Activated naive CD4-positive, alpha-beta T cell treated with anti-CD3 and anti-CD28 coated beads, Interleukin-2, amount 10 ng/mL, durations not matched to agents 7 days and 5 days (primary cell): ENCODE measurements at regions of chr2 and their contacts with region 1.

Region 1: GRCh38 chr2:64914735-64915509 is 74.3 kb upstream of the SLC1A4 start:
- DNase-seq: no peak
- H3K4me3 Mint-ChIP-seq: no peak overlapping the region
- H3K27ac Mint-ChIP-seq: no peak overlapping the region
- H3K4me1 Mint-ChIP-seq: peaks cover 36% of the 10 kb centered on the region
- H3K27me3 Mint-ChIP-seq: peaks cover 4% of the 10 kb centered on the region

Region 2: GRCh38 chr2:64945973-64946768 is 31.2 kb after region 1 on chr2:
- CTCF ChIA-PET with region 1: interaction called, 11 read pairs
- DNase-seq: peak; percentile 79
- H3K4me3 Mint-ChIP-seq: peak overlapping the region; percentile 67
- H3K27ac Mint-ChIP-seq: peak overlapping the region; percentile 91
- H3K4me1 Mint-ChIP-seq: peaks cover 56% of the 10 kb centered on the region
- H3K27me3 Mint-ChIP-seq: peaks cover 1% of the 10 kb centered on the region

Region 3: DNA sequence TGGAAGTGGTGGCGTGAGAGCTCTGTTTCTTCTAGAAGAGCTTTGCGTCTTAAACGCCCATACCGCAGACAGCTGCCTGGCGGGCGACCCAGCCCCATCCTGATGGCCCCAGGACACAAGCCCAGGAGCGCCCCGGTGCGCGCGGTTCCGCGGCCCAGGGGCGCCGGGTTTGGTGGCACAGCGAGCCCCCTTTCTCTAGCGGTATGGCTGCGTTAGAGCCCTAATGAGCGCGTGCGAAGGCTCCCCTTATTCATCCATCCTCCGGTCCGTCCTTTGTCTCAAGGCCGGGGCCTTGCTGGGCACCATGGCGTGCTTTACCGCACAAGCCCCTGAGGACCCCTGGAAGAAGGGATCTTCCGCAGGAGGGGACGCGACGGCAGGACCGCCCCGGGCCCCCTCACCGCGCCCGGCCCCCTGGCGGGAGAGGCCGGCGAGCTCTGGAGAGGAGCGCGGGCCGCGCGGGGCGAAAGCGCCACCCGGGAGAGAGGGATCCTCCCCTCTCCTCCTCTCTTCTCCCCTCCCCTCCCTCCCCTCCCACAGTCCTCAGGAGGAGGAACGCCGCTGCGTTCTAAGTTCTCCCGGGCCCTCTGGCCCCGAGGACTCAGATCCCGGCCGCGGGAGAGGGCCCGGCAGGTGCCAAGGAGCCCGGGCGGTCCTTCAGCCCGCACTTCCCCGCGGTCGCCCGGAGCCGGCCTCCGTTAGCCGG is 73.7 kb after region 1 on chr2:
- CTCF ChIA-PET with region 1: interaction called, 60 read pairs
- DNase-seq: peak; percentile 84
- H3K4me3 Mint-ChIP-seq: peak overlapping the region; percentile 69
- H3K27ac Mint-ChIP-seq: peak overlapping the region; percentile 84
- H3K4me1 Mint-ChIP-seq: peaks cover 63% of the 10 kb centered on the region
- H3K27me3 Mint-ChIP-seq: peaks cover 4% of the 10 kb centered on the region

Region 4: DNA sequence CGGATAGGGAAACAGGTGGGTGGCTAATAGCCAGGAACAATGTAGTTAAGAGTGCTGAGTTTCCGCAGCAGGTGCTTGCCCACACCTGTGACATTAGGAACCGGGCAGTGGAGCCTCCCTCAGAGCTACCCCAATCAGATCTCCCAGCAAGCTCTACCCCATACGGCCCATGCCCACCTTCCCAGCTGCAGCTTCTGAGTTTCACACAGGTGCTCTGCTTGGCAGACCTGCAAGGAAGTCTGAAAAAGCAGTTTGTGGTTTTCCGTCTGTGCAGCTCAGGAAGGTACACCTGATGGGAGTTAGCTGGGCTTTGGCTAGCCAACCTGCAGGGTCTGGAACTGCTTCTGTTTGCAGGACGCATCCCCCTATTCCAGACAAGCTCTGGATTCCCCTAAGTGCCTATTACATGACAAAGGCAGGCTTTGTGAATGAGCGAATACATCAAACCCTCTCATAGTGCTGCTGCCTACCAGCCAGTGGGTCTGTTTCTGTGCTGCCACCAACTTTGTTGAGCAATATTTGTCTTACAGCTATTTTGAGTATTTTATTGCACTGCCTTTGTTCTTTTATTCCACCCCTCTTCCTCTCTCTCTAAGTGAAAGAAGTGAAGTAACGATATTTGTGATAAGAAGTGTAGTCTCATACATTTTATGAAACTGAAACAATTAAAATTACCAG is 116.6 kb after region 1 on chr2:
- CTCF ChIA-PET with region 1: interaction called, 60 read pairs
- DNase-seq: peak; percentile 29
- H3K4me3 Mint-ChIP-seq: no peak overlapping the region
- H3K27ac Mint-ChIP-seq: peak overlapping the region; percentile 47
- H3K4me1 Mint-ChIP-seq: peaks cover 24% of the 10 kb centered on the region
- H3K27me3 Mint-ChIP-seq: no peaks in the 10 kb centered on the region

Region 5: DNA sequence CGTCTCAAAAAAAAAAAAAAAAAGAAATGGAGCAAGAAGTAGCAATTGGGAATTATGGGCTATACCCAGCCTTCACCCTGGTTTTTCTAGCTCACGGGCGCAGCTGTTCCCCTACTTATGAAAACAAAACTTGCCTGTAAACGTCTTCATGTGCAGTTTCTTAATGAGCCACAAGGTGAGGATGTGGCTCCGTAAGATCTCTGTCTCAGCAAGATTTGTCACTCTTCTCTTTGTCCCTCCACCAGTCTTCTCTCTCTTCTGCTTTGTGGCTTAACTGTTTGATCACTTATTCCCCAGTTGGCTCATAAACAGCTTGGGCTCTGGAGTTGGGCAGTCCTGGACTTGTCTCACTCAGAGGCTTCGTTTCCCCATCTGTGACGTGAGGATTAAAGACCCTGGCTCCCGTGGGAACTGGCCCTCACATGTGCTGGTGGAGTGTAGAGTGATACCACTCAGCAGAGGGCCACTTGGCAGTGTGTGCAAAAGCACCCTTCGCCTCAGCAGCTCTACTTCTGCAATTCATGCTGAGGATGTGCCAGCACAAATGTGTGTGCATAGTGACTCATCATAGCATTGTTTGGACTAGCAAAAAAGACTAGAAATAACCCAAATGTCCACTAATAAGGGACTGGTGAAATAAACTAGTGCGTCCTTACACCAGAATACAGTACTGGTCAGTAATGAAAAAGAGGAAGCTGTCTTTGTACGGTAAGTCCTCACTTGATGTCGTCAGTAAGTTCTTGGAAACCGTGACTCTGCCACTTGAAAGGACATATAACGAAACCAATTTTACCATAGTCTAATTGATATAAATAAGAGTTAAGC is 150.0 kb after region 1 on chr2:
- CTCF ChIA-PET with region 1: interaction called, 12 read pairs
- DNase-seq: peak; percentile 69
- H3K4me3 Mint-ChIP-seq: no peak overlapping the region
- H3K27ac Mint-ChIP-seq: no peak overlapping the region
- H3K4me1 Mint-ChIP-seq: peaks cover 38% of the 10 kb centered on the region
- H3K27me3 Mint-ChIP-seq: no peaks in the 10 kb centered on the region